ENCODE measurements at regions of chr10 and their contacts with region 1.

Region 1: GRCh38 chr10:131981429-131982184 is at the start of gene BNIP3:
- DNase-seq: peak; percentile 97
- H3K4me3 ChIP-seq: peak within 1 kb of the TSS; percentile 88 to 99 (median 94)
- H3K27ac ChIP-seq: peak within 1 kb of the TSS; percentile 85 to 92 (median 87)
- H3K4me1 ChIP-seq: peaks cover 0 to 43% (median 32%) of the 10 kb centered on the region in 4 donors
- H3K27me3 ChIP-seq: no peaks in the 10 kb centered on the region
- CTCF ChIP-seq: peak in 1 of 4 experiments; percentile 19
- EP300 ChIP-seq: no peak
- POLR2A ChIP-seq: peak; percentile 55 to 84
- total RNA-seq, gene BNIP3: 55.9 to 125 (median 95.4) TPM

Region 2: GRCh38 chr10:131885391-131886161 is 96.0 kb before region 1 on chr10:
- intact Hi-C with region 1: loop called (anchors 5 kb)
- DNase-seq: peak; percentile 86
- H3K4me3 ChIP-seq: no peak overlapping the region
- H3K27ac ChIP-seq: no peak overlapping the region
- H3K4me1 ChIP-seq: peaks cover 0 to 7% (median 6%) of the 10 kb centered on the region in 4 donors
- H3K27me3 ChIP-seq: peaks cover 0 to 8% (median 3%) of the 10 kb centered on the region in 3 donors
- CTCF ChIP-seq: peak; percentile 90 to 97 (median 92)
- EP300 ChIP-seq: no peak
- POLR2A ChIP-seq: no peak

Region 3: GRCh38 chr10:131900350-131901146 is 81.1 kb before region 1 on chr10 and contains the start of gene PPP2R2D:
- intact Hi-C with region 1: loop called (anchors 1 kb)
- DNase-seq: peak; percentile 97
- H3K4me3 ChIP-seq: peak within 1 kb of the TSS; percentile 84 to 97 (median 92)
- H3K27ac ChIP-seq: peak within 1 kb of the TSS; percentile 91 to 99 (median 96)
- H3K4me1 ChIP-seq: peaks cover 0 to 46% (median 43%) of the 10 kb centered on the region in 4 donors
- H3K27me3 ChIP-seq: peaks cover 0 to 17% (median 0%) of the 10 kb centered on the region in 3 donors
- CTCF ChIP-seq: no peak
- EP300 ChIP-seq: no peak
- POLR2A ChIP-seq: no peak
- total RNA-seq, gene PPP2R2D: 22.7 to 44.0 (median 34.6) TPM

Region 4: GRCh38 chr10:131911451-131911850 is 70.2 kb before region 1 on chr10:
- intact Hi-C with region 1: no loop called
- DNase-seq: peak; percentile 62
- H3K4me3 ChIP-seq: no peak overlapping the region
- H3K27ac ChIP-seq: no peak overlapping the region
- H3K4me1 ChIP-seq: peaks cover 0 to 48% (median 20%) of the 10 kb centered on the region in 4 donors
- H3K27me3 ChIP-seq: no peaks in the 10 kb centered on the region
- CTCF ChIP-seq: no peak
- EP300 ChIP-seq: no peak
- POLR2A ChIP-seq: no peak

Region 5: GRCh38 chr10:131933016-131933695 is 48.5 kb before region 1 on chr10:
- intact Hi-C with region 1: loop called (anchors 5 kb)
- DNase-seq: peak; percentile 49
- H3K4me3 ChIP-seq: no peak overlapping the region
- H3K27ac ChIP-seq: peak overlapping the region; percentile 58 to 76 (median 64)
- H3K4me1 ChIP-seq: peaks cover 0 to 58% (median 43%) of the 10 kb centered on the region in 4 donors
- H3K27me3 ChIP-seq: no peaks in the 10 kb centered on the region
- CTCF ChIP-seq: no peak
- EP300 ChIP-seq: no peak
- POLR2A ChIP-seq: no peak

Region 6: DNA sequence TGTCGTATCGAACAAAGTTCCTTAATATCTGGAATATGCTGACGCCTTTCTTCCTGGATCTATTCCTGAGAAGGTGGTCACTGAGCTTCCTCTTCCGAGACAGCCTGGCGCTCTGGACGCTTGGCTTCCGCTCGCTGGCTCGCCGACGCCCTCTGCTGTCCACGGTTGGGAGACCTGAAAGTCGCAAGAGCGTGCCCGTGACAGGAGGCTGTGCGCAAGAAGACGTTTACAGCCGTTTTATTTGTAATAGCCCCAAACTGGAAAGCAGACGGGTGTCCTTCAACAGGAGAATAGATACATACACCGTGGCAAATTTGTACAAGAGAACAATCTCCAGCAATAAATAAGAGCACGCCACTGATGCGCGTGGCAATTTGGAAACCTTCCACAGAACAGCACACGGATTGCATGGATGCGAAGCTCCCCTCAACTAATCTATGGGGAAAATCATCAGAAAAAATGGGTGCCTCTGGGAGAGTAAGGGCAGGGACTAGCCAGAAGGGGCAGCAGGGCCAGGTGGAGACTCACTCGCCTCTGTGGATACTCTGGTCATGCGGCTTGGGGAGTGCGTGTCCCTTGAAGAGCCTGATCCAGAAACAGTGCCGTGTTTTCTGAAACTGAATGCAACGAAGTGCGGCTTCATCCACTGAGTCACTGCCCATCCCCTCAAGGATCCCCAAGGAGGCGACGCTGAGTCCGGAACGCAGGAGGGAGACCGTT is 41.6 kb after region 1 on chr10:
- intact Hi-C with region 1: loop called (anchors 1 kb)
- DNase-seq: peak; percentile 90
- H3K4me3 ChIP-seq: peak overlapping the region; percentile 16 to 49 (median 42)
- H3K27ac ChIP-seq: peak overlapping the region in 1 of 4 donors; percentile 25
- H3K4me1 ChIP-seq: peaks cover 0 to 9% (median 8%) of the 10 kb centered on the region in 4 donors
- H3K27me3 ChIP-seq: peaks cover 0 to 18% (median 0%) of the 10 kb centered on the region in 3 donors
- CTCF ChIP-seq: peak; percentile 87 to 95 (median 90)
- EP300 ChIP-seq: no peak
- POLR2A ChIP-seq: no peak

Region 7: DNA sequence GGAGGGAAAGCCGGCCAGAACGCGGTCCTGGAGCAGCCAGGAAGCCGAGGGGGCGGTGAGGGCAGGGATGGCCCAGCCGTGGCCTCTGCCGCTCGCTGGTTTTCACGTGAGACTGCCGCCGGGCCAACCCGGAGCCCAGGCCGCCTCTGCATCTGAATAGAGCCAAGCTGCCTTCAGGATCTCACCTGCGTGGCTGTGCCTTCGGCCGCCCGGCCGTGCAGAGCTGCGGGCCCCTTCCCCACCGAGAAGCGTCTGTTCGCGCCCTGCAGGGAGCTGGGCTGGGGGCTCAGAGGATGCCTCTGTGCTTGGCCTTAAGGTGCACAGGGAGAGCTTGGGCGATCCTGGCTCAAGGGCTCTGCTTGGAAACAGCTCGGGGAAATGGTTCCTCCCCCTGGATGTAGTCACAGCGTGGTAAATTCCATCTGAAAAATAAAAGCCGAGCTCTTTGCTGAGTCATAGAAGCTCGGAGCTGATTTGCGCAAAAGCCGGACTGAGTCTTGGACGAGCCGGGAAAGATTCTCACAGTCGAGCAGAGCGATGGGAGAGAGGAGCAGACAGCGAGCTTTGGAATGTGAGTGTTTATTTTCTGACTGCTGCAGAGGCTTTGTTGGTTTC is 84.0 kb after region 1 on chr10 and contains the start of gene JAKMIP3:
- intact Hi-C with region 1: loop called (anchors 5 kb)
- DNase-seq: peak; percentile 89
- H3K4me3 ChIP-seq: peak within 1 kb of the TSS; percentile 26 to 57 (median 48)
- H3K27ac ChIP-seq: peak within 1 kb of the TSS; percentile 79 to 93 (median 86)
- H3K4me1 ChIP-seq: peaks cover 0 to 28% (median 21%) of the 10 kb centered on the region in 4 donors
- H3K27me3 ChIP-seq: no peaks in the 10 kb centered on the region
- CTCF ChIP-seq: no peak
- EP300 ChIP-seq: no peak
- POLR2A ChIP-seq: no peak
- total RNA-seq, gene JAKMIP3: 0.49 to 3.0 (median 0.97) TPM

Measured in sigmoid colon (tissue), 7 donors.